Heart right ventricle (tissue), 16 donors: ENCODE measurements at regions of chr11 and their contacts with region 1.

Region 1: GRCh38 chr11:122439911-122440810 is 215.4 kb upstream of the UBASH3B start:
- DNase-seq: peak; percentile 33 to 50
- ATAC-seq: peak; percentile 55 to 91 (median 76)
- H3K4me3 ChIP-seq: peak overlapping the region in 9 of 10 donors; percentile 38 to 68 (median 58)
- H3K27ac ChIP-seq: peak overlapping the region; percentile 63 to 85 (median 82)
- H3K4me1 ChIP-seq: peaks cover 0 to 25% (median 7%) of the 10 kb centered on the region in 9 donors
- H3K27me3 ChIP-seq: peaks cover 0 to 15% (median 0%) of the 10 kb centered on the region in 7 donors
- CTCF ChIP-seq: no peak

Region 2: GRCh38 chr11:122209619-122210366 is 230.4 kb before region 1 on chr11:
- intact Hi-C with region 1: loop called in 1 of 10 experiments (anchors 5 kb)
- DNase-seq: peak in 1 of 2 donors; percentile 90
- ATAC-seq: peak; percentile 67 to 81 (median 74)
- H3K4me3 ChIP-seq: no peak overlapping the region
- H3K27ac ChIP-seq: peak overlapping the region in 7 of 10 donors; percentile 6 to 64 (median 40)
- H3K4me1 ChIP-seq: peaks cover 0 to 51% (median 40%) of the 10 kb centered on the region in 9 donors
- H3K27me3 ChIP-seq: no peaks in the 10 kb centered on the region
- CTCF ChIP-seq: no peak

Region 3: DNA sequence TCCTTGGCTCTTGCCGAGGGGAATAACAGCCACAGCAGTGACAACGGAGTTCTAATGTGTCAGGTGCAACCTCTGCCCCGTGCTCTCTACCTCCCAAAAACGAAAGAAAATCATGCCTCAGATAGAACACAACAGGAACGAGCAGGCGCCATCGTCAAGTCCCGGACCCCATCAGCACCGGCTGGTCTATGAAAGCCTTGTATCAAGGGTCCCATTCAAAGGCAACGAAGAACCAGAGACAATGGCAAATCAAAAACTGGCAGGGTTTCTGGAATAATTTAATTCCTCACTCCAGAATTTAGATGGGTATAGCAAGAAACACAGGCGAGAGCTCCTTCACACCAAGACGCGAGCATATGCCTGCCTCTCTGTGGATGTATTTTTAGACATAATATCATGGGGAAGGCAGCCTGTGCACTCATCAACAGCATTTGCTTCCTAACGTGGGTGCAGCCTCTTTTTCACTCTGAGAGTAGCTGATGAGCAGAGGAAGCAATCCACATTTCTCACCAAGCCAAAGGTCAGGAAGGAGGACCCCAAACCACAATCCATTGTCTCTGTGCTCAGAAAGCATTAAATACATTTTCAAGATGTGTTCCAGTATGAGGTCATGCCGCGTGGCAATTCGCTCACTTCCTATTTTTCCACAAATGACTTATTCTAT is 130.8 kb before region 1 on chr11:
- intact Hi-C with region 1: loop called in 4 of 10 experiments (anchors 5 to 10 kb)
- DNase-seq: peak in 1 of 2 donors; percentile 45
- ATAC-seq: peak; percentile 63 to 97 (median 91)
- H3K4me3 ChIP-seq: peak overlapping the region in 9 of 10 donors; percentile 21 to 55 (median 47)
- H3K27ac ChIP-seq: peak overlapping the region in 9 of 10 donors; percentile 46 to 86 (median 73)
- H3K4me1 ChIP-seq: peaks cover 0 to 38% (median 7%) of the 10 kb centered on the region in 9 donors
- H3K27me3 ChIP-seq: no peaks in the 10 kb centered on the region
- CTCF ChIP-seq: no peak

Region 4: GRCh38 chr11:122345586-122345985 is 94.6 kb before region 1 on chr11:
- intact Hi-C with region 1: loop called in 1 of 10 experiments (anchors 5 kb)
- DNase-seq: no peak
- ATAC-seq: no peak
- H3K4me3 ChIP-seq: no peak overlapping the region
- H3K27ac ChIP-seq: peak overlapping the region in 1 of 10 donors; percentile 14
- H3K4me1 ChIP-seq: peaks cover 3 to 37% (median 14%) of the 10 kb centered on the region in 9 donors
- H3K27me3 ChIP-seq: no peaks in the 10 kb centered on the region
- CTCF ChIP-seq: no peak

Region 5: DNA sequence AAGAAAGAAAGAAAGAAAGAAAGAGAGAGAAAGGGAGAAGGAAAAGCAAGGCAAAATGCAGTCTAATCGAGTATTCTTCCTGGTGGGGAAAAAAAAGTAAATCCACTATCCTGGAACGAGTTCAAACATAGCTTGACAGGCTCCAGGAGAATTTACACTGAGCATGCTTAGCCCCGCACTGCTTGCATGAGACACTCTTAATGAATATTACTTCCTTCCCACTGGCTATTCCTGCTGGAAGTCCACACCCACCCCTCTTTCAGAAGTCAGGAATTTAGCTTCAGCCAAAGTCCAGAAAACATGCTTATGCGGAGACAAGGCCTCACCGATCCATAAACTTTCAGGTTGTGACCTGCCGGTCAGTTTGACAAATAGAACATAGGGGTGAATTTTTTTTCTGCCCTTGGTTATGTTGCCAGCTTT is 72.3 kb before region 1 on chr11:
- intact Hi-C with region 1: loop called in 3 of 10 experiments (anchors 5 to 10 kb)
- DNase-seq: peak in 1 of 2 donors; percentile 46
- ATAC-seq: peak; percentile 61 to 94 (median 90)
- H3K4me3 ChIP-seq: peak overlapping the region in 6 of 10 donors; percentile 2 to 39 (median 12)
- H3K27ac ChIP-seq: peak overlapping the region in 8 of 10 donors; percentile 11 to 80 (median 48)
- H3K4me1 ChIP-seq: peaks cover 0 to 34% (median 24%) of the 10 kb centered on the region in 9 donors
- H3K27me3 ChIP-seq: no peaks in the 10 kb centered on the region
- CTCF ChIP-seq: no peak

Region 6: DNA sequence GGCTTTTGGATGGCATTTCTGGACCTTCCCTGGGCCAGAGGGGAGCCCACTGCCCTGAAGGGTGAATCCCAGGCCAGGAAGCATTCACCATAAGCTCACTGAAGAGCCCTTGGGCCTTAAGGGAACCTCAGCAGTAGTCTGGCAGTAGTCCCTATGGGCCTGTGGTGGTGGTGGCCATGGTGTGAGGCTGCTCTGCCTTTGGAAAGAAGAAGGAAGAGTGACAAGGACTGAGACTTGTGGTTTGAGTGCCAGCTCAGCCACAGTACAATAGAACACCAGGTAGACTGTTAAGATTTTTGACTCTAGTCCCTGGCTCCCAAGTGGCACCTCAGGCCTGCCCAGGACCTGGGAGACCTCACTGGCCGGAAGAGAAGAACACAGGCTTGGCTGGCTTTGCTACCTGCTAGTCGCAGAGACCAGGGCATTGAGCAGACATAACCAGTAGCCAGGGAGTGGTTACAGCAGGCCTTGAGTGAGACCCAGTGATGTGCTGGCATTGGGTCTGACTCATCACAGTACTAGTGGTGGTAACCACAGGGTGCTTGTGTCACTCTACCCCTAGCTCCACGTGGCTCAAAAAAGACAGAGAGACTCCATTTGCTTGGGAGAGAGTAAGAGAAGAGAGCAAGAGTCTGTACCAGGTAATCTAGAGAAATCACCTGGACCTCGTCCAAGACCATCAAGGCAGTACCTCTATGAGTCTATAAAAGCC is 64.3 kb before region 1 on chr11:
- intact Hi-C with region 1: loop called in 1 of 10 experiments (anchors 10 kb)
- DNase-seq: no peak
- ATAC-seq: no peak
- H3K4me3 ChIP-seq: no peak overlapping the region
- H3K27ac ChIP-seq: no peak overlapping the region
- H3K4me1 ChIP-seq: no peaks in the 10 kb centered on the region
- H3K27me3 ChIP-seq: no peaks in the 10 kb centered on the region
- CTCF ChIP-seq: no peak

Region 7: DNA sequence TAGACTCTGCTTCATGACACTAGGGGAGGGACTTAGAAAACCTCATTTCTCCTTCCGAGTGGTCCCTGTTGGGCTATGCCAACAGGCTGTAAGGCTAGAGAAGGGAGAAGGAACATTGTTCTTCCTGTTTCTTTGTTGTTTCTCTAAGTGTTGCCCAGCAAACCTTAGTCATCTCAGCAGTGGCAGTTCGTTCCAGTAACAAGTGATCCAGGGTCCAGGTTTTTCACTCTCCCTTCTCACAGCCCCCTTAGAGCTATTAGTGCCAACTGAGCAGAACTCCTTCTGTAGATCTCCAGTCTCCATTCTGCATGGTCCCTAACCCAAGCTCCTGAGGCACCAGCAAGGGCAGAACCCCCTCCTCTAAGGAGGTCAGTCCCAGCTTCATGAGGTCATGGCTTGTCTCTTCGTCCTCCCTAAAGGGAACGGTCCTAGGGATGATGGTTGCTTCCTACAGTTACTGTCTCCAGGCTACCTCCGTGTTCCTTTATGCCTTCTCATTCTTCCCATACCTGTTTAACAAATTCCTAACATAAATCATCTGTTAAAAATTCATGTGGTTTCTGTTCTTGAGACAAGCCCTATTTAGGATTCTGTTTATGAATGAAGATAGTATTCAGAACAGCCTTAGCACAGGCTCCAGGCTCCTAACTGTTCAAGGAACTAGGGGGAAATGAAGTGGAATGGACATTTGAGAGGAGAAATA is 46.8 kb after region 1 on chr11:
- intact Hi-C with region 1: no loop called
- DNase-seq: no peak
- ATAC-seq: no peak
- H3K4me3 ChIP-seq: no peak overlapping the region
- H3K27ac ChIP-seq: no peak overlapping the region
- H3K4me1 ChIP-seq: peaks cover 0 to 15% (median 11%) of the 10 kb centered on the region in 9 donors
- H3K27me3 ChIP-seq: no peaks in the 10 kb centered on the region
- CTCF ChIP-seq: no peak